CD8-positive, alpha-beta T cell (primary cell): ENCODE measurements at regions of chr11 and their contacts with region 1.

Region 1: DNA sequence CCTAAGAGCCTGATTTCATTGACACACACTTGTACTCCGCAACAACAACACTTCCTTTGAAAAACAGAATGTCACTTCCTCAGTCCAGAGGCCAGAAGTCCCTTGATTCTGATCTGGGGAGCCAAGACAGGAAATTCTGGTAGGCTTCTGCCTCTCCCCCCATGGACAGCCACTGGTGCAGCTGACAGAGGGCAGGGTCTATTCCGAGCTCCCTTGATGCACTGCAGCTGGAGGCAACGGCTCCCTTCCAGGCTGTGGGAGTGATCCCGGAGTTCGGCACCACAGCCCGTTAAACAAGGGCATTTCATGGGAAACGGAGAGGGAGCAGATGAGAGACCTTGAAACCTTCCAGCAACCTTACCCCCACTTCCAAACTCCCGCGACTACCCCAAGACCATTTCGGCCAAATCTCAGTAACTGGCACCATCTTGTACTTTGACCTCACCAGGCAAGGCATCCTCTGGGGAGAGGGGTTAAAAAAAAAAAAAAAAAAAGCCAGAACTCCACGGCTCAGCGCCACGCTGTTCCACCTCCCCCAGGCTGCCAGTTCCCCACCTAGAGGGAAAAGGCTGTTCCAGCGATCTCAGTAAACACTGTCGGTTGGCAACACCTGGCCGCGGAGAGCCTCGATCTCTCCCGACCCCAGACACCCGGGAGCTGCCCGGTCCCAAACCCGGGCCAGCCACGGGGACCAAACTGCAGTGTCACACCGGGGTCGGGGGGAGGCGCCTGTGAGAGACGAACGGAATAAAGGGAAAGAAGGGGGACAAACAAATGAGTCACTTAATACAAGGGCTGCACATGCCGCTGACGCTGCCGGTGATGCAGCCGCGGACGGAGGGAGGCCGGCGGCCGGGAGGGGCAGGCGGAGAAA is 1.1 kb downstream of the GAB2 start:
- DNase-seq: peak; percentile 38 to 84 (median 78)
- ATAC-seq: peak; percentile 74
- H3K4me3 ChIP-seq: peak overlapping the region; percentile 52 to 57
- H3K4me3 Mint-ChIP-seq: peak overlapping the region; percentile 91
- H3K27ac ChIP-seq: peak overlapping the region in 1 of 2 experiments; percentile 26
- H3K27ac Mint-ChIP-seq: peak overlapping the region; percentile 90
- H3K4me1 ChIP-seq: peaks cover 12% of the 10 kb centered on the region
- H3K4me1 Mint-ChIP-seq: peaks cover 29% of the 10 kb centered on the region
- H3K27me3 ChIP-seq: no peaks in the 10 kb centered on the region
- H3K27me3 Mint-ChIP-seq: peaks cover 23% of the 10 kb centered on the region
- CTCF ChIP-seq: peak; percentile 65

Region 2: GRCh38 chr11:77820563-77821348 is 595.8 kb before region 1 on chr11 and contains the starts of genes AAMDC and RSF1:
- CTCF ChIA-PET with region 1: no interaction called
- POLR2A ChIA-PET with region 1: no interaction called
- intact Hi-C with region 1: loop called in 1 of 2 experiments (anchors 5 kb)
- DNase-seq: peak; percentile 92 to 99 (median 97)
- ATAC-seq: peak; percentile 79
- H3K4me3 ChIP-seq: peak within 1 kb of the TSS; percentile 79 to 95
- H3K4me3 Mint-ChIP-seq: peak within 1 kb of the TSS; percentile 100
- H3K27ac ChIP-seq: peak within 1 kb of the TSS; percentile 83 to 91
- H3K27ac Mint-ChIP-seq: peak within 1 kb of the TSS; percentile 99
- H3K4me1 ChIP-seq: peaks cover 35% of the 10 kb centered on the region
- H3K4me1 Mint-ChIP-seq: peaks cover 38% of the 10 kb centered on the region
- H3K27me3 ChIP-seq: no peaks in the 10 kb centered on the region
- H3K27me3 Mint-ChIP-seq: no peaks in the 10 kb centered on the region
- CTCF ChIP-seq: peak; percentile 53
- total RNA-seq, gene AAMDC: 1.4 to 2.0 TPM
- total RNA-seq, gene RSF1: 96.7 to 103 TPM

Region 3: GRCh38 chr11:78079232-78080083 is 337.1 kb before region 1 on chr11 and contains the start of gene NDUFC2:
- CTCF ChIA-PET with region 1: no interaction called
- POLR2A ChIA-PET with region 1: no interaction called
- intact Hi-C with region 1: loop called in 1 of 2 experiments (anchors 5 kb)
- DNase-seq: peak; percentile 30 to 83 (median 66)
- ATAC-seq: peak; percentile 82
- H3K4me3 ChIP-seq: peak within 1 kb of the TSS; percentile 74 to 97
- H3K4me3 Mint-ChIP-seq: peak within 1 kb of the TSS; percentile 96
- H3K27ac ChIP-seq: peak within 1 kb of the TSS; percentile 76 to 78
- H3K27ac Mint-ChIP-seq: peak within 1 kb of the TSS; percentile 96
- H3K4me1 ChIP-seq: peaks cover 56% of the 10 kb centered on the region
- H3K4me1 Mint-ChIP-seq: peaks cover 63% of the 10 kb centered on the region
- H3K27me3 ChIP-seq: no peaks in the 10 kb centered on the region
- H3K27me3 Mint-ChIP-seq: no peaks in the 10 kb centered on the region
- CTCF ChIP-seq: no peak
- total RNA-seq, gene NDUFC2: 72.2 to 76.3 TPM

Region 4: DNA sequence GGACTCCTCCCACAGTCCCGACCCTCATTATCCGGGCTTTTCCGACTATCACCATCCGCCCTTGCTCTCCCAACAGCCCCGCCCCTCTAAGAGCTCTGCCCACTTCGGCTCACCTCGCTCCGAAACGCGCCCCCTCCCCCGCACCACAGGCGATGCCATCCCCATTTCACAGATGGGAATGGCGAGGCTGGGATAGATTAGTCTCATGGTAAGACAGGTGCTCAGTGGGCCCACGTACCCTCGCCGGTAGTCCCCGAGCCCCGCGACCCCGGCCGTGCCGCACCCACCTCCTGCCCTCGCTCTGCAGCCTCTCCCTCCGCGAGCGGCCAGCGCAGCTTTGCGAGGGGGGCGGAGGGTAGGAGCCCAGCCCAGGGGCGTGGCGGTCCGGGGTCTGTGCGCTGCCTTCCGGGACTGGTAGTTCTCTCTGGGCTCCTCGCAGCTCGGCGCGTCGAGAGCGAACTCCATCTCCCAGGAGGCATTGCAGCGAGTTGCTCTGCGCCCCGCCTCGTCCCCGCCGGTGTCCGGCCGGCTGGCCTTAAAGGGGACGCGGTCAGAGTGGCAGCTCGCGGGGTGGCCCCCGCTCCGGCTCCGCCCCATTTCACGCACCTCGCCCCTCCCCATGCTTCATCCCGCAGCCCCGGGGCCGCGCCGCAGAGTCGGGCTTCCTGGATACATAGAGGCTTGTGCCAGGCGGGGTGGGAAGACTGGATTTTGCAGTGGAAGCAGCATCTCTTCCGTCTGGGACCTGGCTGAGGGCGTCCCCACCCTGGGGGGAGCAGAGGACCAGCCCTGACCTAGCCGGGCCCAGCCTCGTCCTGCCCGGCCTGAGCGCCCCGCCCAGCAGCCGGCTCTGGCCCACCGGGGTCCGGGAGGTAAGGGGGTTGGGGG is 228.0 kb before region 1 on chr11 and contains the starts of genes KCTD21 and USP35:
- CTCF ChIA-PET with region 1: no interaction called
- POLR2A ChIA-PET with region 1: interaction called, 5 read pairs
- intact Hi-C with region 1: loop called (anchors 1 to 5 kb)
- DNase-seq: peak; percentile 78 to 95 (median 91)
- ATAC-seq: peak; percentile 79
- H3K4me3 ChIP-seq: peak within 1 kb of the TSS; percentile 90 to 100
- H3K4me3 Mint-ChIP-seq: peak within 1 kb of the TSS; percentile 97
- H3K27ac ChIP-seq: peak within 1 kb of the TSS; percentile 73 to 75
- H3K27ac Mint-ChIP-seq: peak within 1 kb of the TSS; percentile 98
- H3K4me1 ChIP-seq: peaks cover 37% of the 10 kb centered on the region
- H3K4me1 Mint-ChIP-seq: peaks cover 55% of the 10 kb centered on the region
- H3K27me3 ChIP-seq: no peaks in the 10 kb centered on the region
- H3K27me3 Mint-ChIP-seq: no peaks in the 10 kb centered on the region
- CTCF ChIP-seq: no peak
- total RNA-seq, gene KCTD21: 3.0 to 3.4 TPM
- total RNA-seq, gene USP35: 22.3 to 23.4 TPM

Region 5: GRCh38 chr11:78432058-78432515 is 15.5 kb after region 1 on chr11:
- CTCF ChIA-PET with region 1: interaction called, 40 read pairs
- POLR2A ChIA-PET with region 1: interaction called, 4 read pairs
- intact Hi-C with region 1: no loop called
- DNase-seq: peak in 2 of 9 experiments; percentile 7 to 26
- ATAC-seq: no peak
- H3K4me3 ChIP-seq: no peak overlapping the region
- H3K4me3 Mint-ChIP-seq: no peak overlapping the region
- H3K27ac ChIP-seq: no peak overlapping the region
- H3K27ac Mint-ChIP-seq: no peak overlapping the region
- H3K4me1 ChIP-seq: no peaks in the 10 kb centered on the region
- H3K4me1 Mint-ChIP-seq: no peaks in the 10 kb centered on the region
- H3K27me3 ChIP-seq: no peaks in the 10 kb centered on the region
- H3K27me3 Mint-ChIP-seq: no peaks in the 10 kb centered on the region
- CTCF ChIP-seq: no peak

Region 6: GRCh38 chr11:78574386-78575381 is 158.1 kb after region 1 on chr11 and contains the start of gene NARS2:
- CTCF ChIA-PET with region 1: interaction called, 7 read pairs
- POLR2A ChIA-PET with region 1: interaction called, 12 read pairs
- intact Hi-C with region 1: no loop called
- DNase-seq: peak; percentile 94 to 99 (median 98)
- ATAC-seq: peak; percentile 98
- H3K4me3 ChIP-seq: peak within 1 kb of the TSS; percentile 73 to 95
- H3K4me3 Mint-ChIP-seq: peak within 1 kb of the TSS; percentile 94
- H3K27ac ChIP-seq: peak within 1 kb of the TSS; percentile 77 to 88
- H3K27ac Mint-ChIP-seq: peak within 1 kb of the TSS; percentile 99
- H3K4me1 ChIP-seq: peaks cover 16% of the 10 kb centered on the region
- H3K4me1 Mint-ChIP-seq: peaks cover 39% of the 10 kb centered on the region
- H3K27me3 ChIP-seq: no peaks in the 10 kb centered on the region
- H3K27me3 Mint-ChIP-seq: peaks cover 4% of the 10 kb centered on the region
- CTCF ChIP-seq: no peak
- total RNA-seq, gene NARS2: 6.3 to 8.3 TPM